ENCODE measurements at regions of chr11 and their contacts with region 1.

Region 1: GRCh38 chr11:12411806-12412727 is 34.7 kb downstream of the PARVA start:
- DNase-seq: peak; percentile 86
- H3K4me3 ChIP-seq: no peak overlapping the region
- H3K27ac ChIP-seq: peak overlapping the region; percentile 81
- H3K4me1 ChIP-seq: peaks cover 45% of the 10 kb centered on the region
- H3K27me3 ChIP-seq: no peaks in the 10 kb centered on the region
- CTCF ChIP-seq: peak; percentile 74 to 76

Region 2: DNA sequence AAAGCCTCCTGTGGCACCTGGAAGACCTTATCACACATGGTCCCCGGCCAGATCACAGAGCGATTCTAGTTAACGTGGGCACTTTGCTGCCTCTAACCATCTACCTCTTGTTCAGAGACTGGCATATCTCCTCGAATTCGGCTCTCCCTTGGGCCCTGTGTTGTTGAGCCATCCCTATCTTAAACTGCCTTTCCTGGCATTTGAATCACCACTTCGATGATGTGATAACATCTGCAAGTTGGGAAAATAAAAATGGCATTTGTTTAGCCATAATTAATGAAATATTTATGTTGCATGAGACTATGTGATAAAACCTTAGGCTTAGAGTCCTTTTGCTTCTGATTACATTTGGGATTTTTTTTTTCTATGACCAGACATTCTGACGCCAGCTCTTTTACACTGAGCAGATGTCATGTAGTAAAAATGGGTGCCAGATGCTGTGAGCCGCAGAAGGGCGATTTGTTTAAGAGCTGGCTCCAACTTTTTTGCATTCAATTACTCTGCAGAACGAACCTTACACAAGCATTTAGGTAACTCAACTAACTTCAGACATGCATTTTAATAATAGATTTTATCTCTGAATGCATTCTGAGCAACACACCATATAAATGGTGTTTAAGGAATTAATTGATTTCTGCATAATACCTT is 93.2 kb before region 1 on chr11:
- CTCF ChIA-PET with region 1: no interaction called
- dilution Hi-C with region 1: no loop called
- in situ Hi-C with region 1: no loop called
- intact Hi-C with region 1: no loop called
- DNase-seq: no peak
- H3K4me3 ChIP-seq: no peak overlapping the region
- H3K27ac ChIP-seq: no peak overlapping the region
- H3K4me1 ChIP-seq: no peaks in the 10 kb centered on the region
- H3K27me3 ChIP-seq: no peaks in the 10 kb centered on the region
- CTCF ChIP-seq: no peak

Region 3: GRCh38 chr11:12356944-12357650 is 55.0 kb before region 1 on chr11:
- CTCF ChIA-PET with region 1: no interaction called
- dilution Hi-C with region 1: no loop called
- in situ Hi-C with region 1: no loop called
- intact Hi-C with region 1: no loop called
- DNase-seq: no peak
- H3K4me3 ChIP-seq: no peak overlapping the region
- H3K27ac ChIP-seq: no peak overlapping the region
- H3K4me1 ChIP-seq: no peaks in the 10 kb centered on the region
- H3K27me3 ChIP-seq: no peaks in the 10 kb centered on the region
- CTCF ChIP-seq: no peak

Region 4: DNA sequence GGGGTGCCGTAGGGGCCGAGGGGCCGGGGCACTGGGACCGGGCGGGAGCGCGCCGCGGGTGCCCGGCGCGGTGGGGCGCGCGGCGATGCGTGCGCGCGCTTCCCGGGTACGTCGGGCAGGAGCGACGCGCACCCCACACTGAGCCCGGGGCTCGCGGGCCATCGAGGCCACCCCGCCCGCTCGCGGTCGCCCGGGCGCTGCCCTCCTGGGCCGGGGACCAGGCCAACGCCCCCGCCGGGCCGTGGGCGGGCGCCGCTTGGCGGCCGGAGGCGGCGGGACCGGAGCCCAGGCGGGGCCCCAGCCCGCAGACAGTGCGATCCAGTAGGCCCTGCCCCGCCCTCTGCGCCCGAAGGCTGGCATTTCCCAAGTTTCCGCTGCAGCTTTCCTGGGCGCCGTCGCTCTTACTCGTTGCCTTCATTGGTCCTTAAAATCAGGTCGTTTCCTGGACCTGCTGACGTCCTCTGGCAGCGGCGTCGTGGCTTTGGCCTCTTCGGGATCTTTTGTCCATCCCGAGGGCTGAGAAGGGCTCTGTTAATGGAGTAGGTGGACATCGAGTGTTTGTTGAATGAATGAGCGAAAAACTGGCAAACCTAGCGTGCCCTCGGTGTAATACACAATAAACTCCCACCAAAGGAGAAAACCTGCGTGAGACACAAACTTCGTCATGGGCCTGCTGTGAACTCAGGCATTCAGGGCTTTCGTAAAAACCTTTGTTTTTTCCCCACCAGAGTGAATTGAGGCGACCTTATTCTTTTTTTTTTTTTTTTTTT is 34.1 kb before region 1 on chr11:
- CTCF ChIA-PET with region 1: no interaction called
- dilution Hi-C with region 1: no loop called
- in situ Hi-C with region 1: no loop called
- intact Hi-C with region 1: loop called (anchors 2 kb)
- DNase-seq: peak; percentile 81
- H3K4me3 ChIP-seq: peak overlapping the region; percentile 63 to 74 (median 71)
- H3K27ac ChIP-seq: peak overlapping the region; percentile 93
- H3K4me1 ChIP-seq: peaks cover 28% of the 10 kb centered on the region
- H3K27me3 ChIP-seq: no peaks in the 10 kb centered on the region
- CTCF ChIP-seq: no peak

Region 5: GRCh38 chr11:12467610-12468009 is 55.5 kb after region 1 on chr11:
- CTCF ChIA-PET with region 1: no interaction called
- dilution Hi-C with region 1: no loop called
- in situ Hi-C with region 1: no loop called
- intact Hi-C with region 1: no loop called
- DNase-seq: no peak
- H3K4me3 ChIP-seq: no peak overlapping the region
- H3K27ac ChIP-seq: no peak overlapping the region
- H3K4me1 ChIP-seq: peaks cover 3% of the 10 kb centered on the region
- H3K27me3 ChIP-seq: no peaks in the 10 kb centered on the region
- CTCF ChIP-seq: no peak

Region 6: GRCh38 chr11:12478743-12479142 is 66.7 kb after region 1 on chr11:
- CTCF ChIA-PET with region 1: no interaction called
- dilution Hi-C with region 1: loop called (anchors 5 kb)
- in situ Hi-C with region 1: no loop called
- intact Hi-C with region 1: no loop called
- DNase-seq: peak; percentile 92
- H3K4me3 ChIP-seq: no peak overlapping the region
- H3K27ac ChIP-seq: no peak overlapping the region
- H3K4me1 ChIP-seq: peaks cover 18% of the 10 kb centered on the region
- H3K27me3 ChIP-seq: no peaks in the 10 kb centered on the region
- CTCF ChIP-seq: no peak

Region 7: DNA sequence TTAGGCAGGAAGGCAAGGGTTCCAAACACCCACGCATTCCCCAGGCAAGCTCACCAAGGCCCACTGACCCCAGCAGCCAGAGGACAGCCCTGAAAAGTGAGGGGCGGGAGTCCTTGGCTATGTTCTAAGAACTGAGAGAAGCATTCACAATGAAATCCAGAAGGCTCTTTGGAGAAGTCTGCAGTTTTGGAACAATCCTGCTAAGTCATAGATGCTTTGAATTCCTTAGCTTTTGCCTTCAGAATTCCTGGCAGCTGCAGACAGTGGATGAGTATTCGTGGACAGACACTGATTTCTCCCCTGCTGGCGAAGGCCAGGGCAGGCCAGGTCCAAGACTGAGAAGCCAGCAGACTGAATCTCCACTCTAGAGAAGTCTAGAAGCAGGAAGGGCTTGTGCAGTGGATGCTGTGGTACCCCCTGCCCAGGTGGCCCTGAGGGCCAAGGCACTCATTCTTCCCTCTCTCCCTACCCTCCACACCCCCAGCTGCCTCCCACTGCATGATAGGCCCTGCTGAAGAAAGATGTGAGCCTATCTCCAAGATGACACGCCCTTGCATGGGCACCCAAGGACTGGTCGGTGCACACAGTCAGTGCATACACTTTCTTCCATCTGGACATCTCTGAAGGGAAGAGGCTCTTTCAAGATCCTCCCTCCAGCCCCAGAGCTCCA is 129.0 kb after region 1 on chr11:
- CTCF ChIA-PET with region 1: no interaction called
- dilution Hi-C with region 1: no loop called
- in situ Hi-C with region 1: no loop called
- intact Hi-C with region 1: loop called (anchors 2 kb)
- DNase-seq: no peak
- H3K4me3 ChIP-seq: no peak overlapping the region
- H3K27ac ChIP-seq: peak overlapping the region; percentile 9
- H3K4me1 ChIP-seq: peaks cover 68% of the 10 kb centered on the region
- H3K27me3 ChIP-seq: no peaks in the 10 kb centered on the region
- CTCF ChIP-seq: peak in 1 of 2 donors; percentile 16

Region 8: DNA sequence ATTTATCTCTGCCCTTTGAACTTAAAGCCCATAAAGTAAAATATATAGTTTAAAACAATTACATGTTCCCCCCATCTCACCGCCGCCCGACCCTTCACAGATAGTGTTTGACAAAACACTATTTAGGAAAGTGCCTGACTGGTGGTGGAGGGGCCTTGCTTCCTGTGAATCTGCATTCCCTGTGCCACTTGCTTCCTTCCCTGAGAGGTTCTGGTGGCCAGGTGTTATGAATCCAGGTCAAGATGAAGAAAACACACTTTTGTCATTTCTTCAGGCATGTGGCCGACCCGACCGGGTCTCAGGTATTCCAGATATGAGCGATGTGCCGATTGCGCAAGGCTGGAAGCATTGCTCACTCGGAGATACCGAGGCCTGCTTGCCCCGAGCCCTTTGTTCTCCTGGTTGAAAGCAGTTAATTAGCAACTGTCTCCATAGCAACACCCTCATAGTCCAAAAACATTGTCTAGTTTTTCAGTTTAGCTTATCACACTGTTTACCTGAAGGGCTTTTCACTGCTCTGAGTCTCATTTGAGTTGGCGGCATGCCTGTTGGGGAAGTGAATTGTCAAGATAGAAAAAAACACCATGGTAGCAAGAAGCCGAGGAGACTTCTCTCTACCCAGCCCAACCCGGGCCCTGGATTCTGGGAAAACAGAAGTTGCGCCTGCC is 390.5 kb after region 1 on chr11:
- CTCF ChIA-PET with region 1: no interaction called
- dilution Hi-C with region 1: loop called (anchors 5 kb)
- in situ Hi-C with region 1: no loop called
- intact Hi-C with region 1: loop called (anchors 5 kb)
- DNase-seq: peak; percentile 99
- H3K4me3 ChIP-seq: no peak overlapping the region
- H3K27ac ChIP-seq: peak overlapping the region; percentile 96
- H3K4me1 ChIP-seq: peaks cover 84% of the 10 kb centered on the region
- H3K27me3 ChIP-seq: no peaks in the 10 kb centered on the region
- CTCF ChIP-seq: no peak

Region 9: DNA sequence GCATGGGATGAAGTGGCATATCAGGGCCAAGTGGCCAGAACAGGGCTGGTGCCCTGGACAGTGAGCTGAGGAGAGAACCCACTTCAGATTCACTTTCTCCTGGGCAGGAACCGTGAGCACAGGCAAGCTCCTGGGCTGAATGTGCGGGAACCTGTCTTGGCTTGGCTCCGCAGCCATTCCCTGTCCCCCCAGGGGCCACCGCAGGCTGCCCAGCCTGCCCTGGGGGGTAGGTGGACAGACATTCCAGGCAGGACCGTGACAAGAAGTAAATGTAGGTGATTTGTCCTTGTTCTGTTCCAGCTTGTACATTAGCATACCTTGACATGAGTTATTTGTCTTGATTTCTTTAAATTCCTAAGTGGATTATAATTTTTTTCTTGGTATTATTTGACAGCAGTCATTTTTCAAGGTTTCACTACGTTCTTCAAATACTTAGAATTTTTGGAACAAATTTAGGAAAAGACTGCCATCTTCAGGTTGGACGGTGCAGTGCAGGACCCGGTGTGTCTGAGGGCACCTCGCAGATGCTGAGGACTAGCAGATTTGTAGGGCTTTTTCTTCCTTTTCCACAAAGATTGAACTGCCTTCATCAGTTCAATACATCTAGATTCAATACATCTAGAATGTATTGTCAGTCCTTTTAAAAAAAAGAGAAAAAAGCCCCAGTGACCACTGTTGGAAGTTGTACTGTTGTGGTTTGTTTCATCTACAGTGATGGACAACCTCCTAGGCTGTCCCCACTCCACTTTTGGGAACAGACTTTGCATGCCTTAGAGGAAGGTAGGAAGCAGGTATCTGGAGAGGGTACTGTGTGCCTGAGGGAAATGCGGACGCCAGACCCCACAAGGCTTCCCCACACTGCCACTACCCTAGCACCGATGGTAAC is 482.0 kb after region 1 on chr11:
- CTCF ChIA-PET with region 1: no interaction called
- dilution Hi-C with region 1: no loop called
- in situ Hi-C with region 1: loop called in 1 of 2 experiments (anchors 25 kb)
- intact Hi-C with region 1: loop called (anchors 1 kb)
- DNase-seq: peak; percentile 42
- H3K4me3 ChIP-seq: no peak overlapping the region
- H3K27ac ChIP-seq: no peak overlapping the region
- H3K4me1 ChIP-seq: peaks cover 18% of the 10 kb centered on the region
- H3K27me3 ChIP-seq: no peaks in the 10 kb centered on the region
- CTCF ChIP-seq: peak; percentile 83 to 91